Dendritic cell treated with granulocyte-macrophage colony-stimulating factor and Interleukin-4, amounts not matched to agents 40 ng/mL and 50 ng/mL, for 4 days (primary cell): ENCODE measurements at regions of chr2 and their contacts with region 1.

Region 1: GRCh38 chr2:218269899-218270720 is at the starts of genes AAMP and PNKD:
- H3K4me3 Mint-ChIP-seq: peak within 1 kb of the TSS; percentile 85
- H3K27ac Mint-ChIP-seq: peak within 1 kb of the TSS; percentile 89
- H3K4me1 Mint-ChIP-seq: peaks cover 69% of the 10 kb centered on the region
- H3K27me3 Mint-ChIP-seq: no peaks in the 10 kb centered on the region

Region 2: GRCh38 chr2:217160978-217161973 is 1108.8 kb before region 1 on chr2:
- intact Hi-C with region 1: no loop called
- H3K4me3 Mint-ChIP-seq: no peak overlapping the region
- H3K27ac Mint-ChIP-seq: no peak overlapping the region
- H3K4me1 Mint-ChIP-seq: peaks cover 20% of the 10 kb centered on the region
- H3K27me3 Mint-ChIP-seq: peaks cover 63% of the 10 kb centered on the region

Region 3: GRCh38 chr2:218252509-218253231 is 17.4 kb before region 1 on chr2:
- intact Hi-C with region 1: no loop called
- H3K4me3 Mint-ChIP-seq: peak overlapping the region; percentile 30
- H3K27ac Mint-ChIP-seq: peak overlapping the region; percentile 81
- H3K4me1 Mint-ChIP-seq: peaks cover 95% of the 10 kb centered on the region
- H3K27me3 Mint-ChIP-seq: no peaks in the 10 kb centered on the region

Region 4: GRCh38 chr2:218286570-218287459 is 16.7 kb after region 1 on chr2:
- intact Hi-C with region 1: loop called (anchors 2 kb)
- H3K4me3 Mint-ChIP-seq: peak overlapping the region; percentile 82
- H3K27ac Mint-ChIP-seq: peak overlapping the region; percentile 99
- H3K4me1 Mint-ChIP-seq: peaks cover 90% of the 10 kb centered on the region
- H3K27me3 Mint-ChIP-seq: no peaks in the 10 kb centered on the region

Region 5: DNA sequence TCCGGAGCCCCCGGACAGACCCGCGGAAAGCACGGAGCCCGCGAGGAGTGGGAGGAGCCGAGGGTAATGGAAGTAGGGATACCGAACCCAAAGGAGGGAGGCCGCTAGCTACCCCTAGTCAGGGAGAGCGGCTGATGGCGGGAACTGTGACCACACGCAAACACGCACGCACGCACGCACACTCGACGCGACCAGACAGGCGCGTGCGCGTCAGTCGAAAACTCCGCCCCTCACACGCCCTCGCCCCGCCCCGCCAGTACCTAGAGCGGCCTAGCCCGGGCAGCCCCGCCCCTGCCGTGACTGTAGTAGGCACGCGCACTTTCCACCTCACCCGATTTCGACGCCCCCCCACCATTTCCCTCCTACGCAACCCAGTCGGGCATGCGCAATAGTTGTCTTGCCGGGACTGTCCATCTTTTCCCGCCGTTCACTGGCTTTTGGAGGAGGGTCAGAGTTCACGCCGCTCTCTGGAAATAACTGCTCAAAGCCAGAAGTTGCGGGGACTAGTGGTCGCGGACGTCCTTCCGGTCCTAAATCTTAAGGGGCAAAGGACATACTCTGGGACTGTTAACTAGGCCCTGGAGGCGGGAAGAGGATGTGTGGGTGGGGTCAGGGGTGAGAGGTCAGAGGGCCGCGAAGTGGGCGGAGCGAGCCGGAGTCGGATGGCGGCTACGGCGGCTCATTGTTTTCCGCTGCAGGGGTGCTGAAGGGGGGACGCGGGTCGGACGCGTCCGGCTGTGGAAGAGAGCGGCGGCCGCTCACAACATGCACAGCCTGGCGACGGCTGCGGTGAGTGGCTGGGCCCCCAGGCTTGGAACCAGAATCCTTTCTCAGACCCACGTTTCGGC is 298.3 kb after region 1 on chr2 and contains the starts of genes CNOT9 and USP37:
- intact Hi-C with region 1: loop called (anchors 5 kb)
- H3K4me3 Mint-ChIP-seq: peak within 1 kb of the TSS; percentile 98
- H3K27ac Mint-ChIP-seq: peak within 1 kb of the TSS; percentile 99
- H3K4me1 Mint-ChIP-seq: peaks cover 46% of the 10 kb centered on the region
- H3K27me3 Mint-ChIP-seq: no peaks in the 10 kb centered on the region